ENCODE measurements at regions of chr5 and their contacts with region 1.

Region 1: DNA sequence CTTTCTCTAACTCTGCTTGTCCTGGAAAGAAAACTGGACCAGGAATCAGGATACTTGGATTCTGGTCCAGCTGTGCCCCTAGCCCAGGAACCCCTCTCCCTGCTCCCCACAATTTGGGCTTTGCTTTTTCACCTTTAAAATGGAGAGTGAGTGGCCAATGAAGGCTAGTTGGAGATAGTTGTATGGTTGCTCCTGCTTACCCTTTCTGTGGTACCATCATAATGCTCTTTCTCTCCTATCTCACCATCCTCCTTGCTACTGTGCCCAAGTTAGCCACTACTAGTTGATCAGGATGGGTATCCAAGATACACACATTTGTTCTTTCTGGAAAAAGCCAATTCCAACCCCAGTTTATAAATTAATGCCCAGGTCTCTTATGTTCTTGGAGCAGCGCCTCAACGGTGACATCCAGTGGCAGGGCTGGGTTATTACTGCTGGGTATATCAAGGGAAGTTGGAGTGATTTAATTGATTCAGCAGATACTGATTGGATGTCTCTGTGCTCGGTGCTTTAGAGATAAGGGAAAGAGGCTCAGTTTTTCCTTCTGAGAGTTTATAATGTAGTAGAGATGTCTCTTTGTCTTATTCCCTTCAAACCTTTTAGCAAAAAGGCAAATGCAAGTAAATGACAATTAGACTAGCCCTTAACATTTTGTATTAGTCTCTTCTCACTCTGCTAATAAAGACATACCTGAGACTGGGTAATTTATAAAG is 38.6 kb downstream of the FAXDC2 start:
- DNase-seq: peak; percentile 30 to 68 (median 58)
- ATAC-seq: peak; percentile 88
- H3K4me3 ChIP-seq: no peak overlapping the region
- H3K4me3 Mint-ChIP-seq: peak overlapping the region in 4 of 10 donors; percentile 10 to 47 (median 23)
- H3K27ac ChIP-seq: no peak overlapping the region
- H3K27ac Mint-ChIP-seq: peak overlapping the region; percentile 1 to 82 (median 55)
- H3K4me1 ChIP-seq: peaks cover 15 to 18% of the 10 kb centered on the region in 2 donors
- H3K4me1 Mint-ChIP-seq: peaks cover 21 to 46% (median 36%) of the 10 kb centered on the region in 7 donors
- H3K27me3 ChIP-seq: no peaks in the 10 kb centered on the region
- H3K27me3 Mint-ChIP-seq: no peaks in the 10 kb centered on the region

Region 2: GRCh38 chr5:154467655-154468354 is 344.0 kb before region 1 on chr5:
- CTCF ChIA-PET with region 1: no interaction called
- POLR2A ChIA-PET with region 1: no interaction called
- intact Hi-C with region 1: loop called in 1 of 2 experiments (anchors 1 kb)
- DNase-seq: peak; percentile 20 to 81 (median 57)
- ATAC-seq: peak; percentile 88
- H3K4me3 ChIP-seq: no peak overlapping the region
- H3K4me3 Mint-ChIP-seq: no peak overlapping the region
- H3K27ac ChIP-seq: no peak overlapping the region
- H3K27ac Mint-ChIP-seq: peak overlapping the region in 1 of 9 donors; percentile 12
- H3K4me1 ChIP-seq: peaks cover 0 to 5% of the 10 kb centered on the region in 2 donors
- H3K4me1 Mint-ChIP-seq: peaks cover 0 to 14% (median 3%) of the 10 kb centered on the region in 7 donors
- H3K27me3 ChIP-seq: peaks cover under 1 to 13% of the 10 kb centered on the region in 2 donors
- H3K27me3 Mint-ChIP-seq: peaks cover 30 to 60% (median 40%) of the 10 kb centered on the region in 5 donors

Region 3: DNA sequence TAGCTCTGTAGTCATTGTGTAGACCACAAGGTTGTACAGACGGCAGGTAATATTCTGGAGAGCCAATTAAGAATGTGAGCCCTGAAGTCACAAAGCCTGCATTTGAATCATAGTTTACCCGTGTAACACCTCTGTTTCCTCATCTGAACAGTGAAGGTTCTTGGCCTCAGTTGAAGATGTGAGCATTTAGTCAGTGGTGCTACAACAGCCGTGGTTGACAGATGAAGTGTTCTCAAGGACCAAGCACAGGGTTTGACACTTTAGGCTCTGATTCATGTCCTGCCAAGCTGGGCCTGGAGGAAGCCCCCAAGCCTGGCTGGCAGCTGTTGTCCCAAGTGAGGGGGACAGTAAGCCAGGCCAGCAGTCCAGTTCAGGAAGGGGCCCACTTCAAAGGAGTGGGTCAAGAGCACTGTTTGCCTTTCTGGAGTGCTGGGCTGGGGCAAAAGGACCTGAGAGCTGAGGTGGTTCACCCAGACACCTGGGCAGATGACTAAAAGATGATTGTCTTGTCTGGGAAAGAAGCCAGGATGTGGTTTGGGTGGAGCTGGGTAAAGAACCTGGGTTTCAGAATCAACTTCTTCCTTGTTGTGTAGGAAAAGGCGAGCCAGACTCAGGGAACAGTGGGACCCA is 17.9 kb after region 1 on chr5:
- CTCF ChIA-PET with region 1: no interaction called
- POLR2A ChIA-PET with region 1: no interaction called
- intact Hi-C with region 1: loop called in 1 of 2 experiments (anchors 2 kb)
- DNase-seq: peak in 8 of 9 donors; percentile 12 to 51 (median 36)
- ATAC-seq: peak; percentile 45
- H3K4me3 ChIP-seq: peak overlapping the region; percentile 21
- H3K4me3 Mint-ChIP-seq: peak overlapping the region; percentile 49 to 84 (median 75)
- H3K27ac ChIP-seq: peak overlapping the region; percentile 66
- H3K27ac Mint-ChIP-seq: peak overlapping the region; percentile 85 to 91 (median 89)
- H3K4me1 ChIP-seq: peaks cover 18 to 28% of the 10 kb centered on the region in 2 donors
- H3K4me1 Mint-ChIP-seq: peaks cover 21 to 64% (median 55%) of the 10 kb centered on the region in 7 donors
- H3K27me3 ChIP-seq: no peaks in the 10 kb centered on the region
- H3K27me3 Mint-ChIP-seq: no peaks in the 10 kb centered on the region

Measured in naive thymus-derived CD4-positive, alpha-beta T cell (primary cell).